ENCODE measurements at regions of chr6 and their contacts with region 1.

Region 1: DNA sequence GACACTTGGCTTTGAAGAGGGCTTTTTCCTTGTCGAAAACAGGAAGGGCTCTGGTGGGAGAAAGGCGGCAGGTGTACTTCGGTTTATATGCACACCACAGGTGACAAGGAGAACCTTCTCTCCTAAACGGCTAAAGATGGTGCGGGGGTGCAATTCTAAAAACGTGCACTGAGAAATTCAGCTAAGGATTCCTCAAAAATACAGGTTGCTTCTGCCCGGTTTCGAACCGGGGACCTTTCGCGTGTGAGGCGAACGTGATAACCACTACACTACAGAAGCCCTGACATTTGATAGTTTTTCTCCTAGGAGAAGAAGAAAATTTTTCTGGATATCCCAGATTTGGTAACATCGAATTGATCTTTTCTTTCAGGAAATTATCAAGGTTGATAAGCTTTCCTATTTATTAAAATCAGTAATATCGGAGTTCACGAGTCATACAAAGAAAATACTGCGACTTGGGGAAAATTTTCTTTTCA is 32.0 kb downstream of the POM121L2 start:
- DNase-seq: peak; percentile 61 to 70
- H3K4me3 ChIP-seq: peak overlapping the region; percentile 60
- H3K27ac ChIP-seq: peak overlapping the region; percentile 3; the same call in 1 of the 2 replicates
- H3K4me1 ChIP-seq: peaks cover 5% of the 10 kb centered on the region
- H3K27me3 ChIP-seq: no peaks in the 10 kb centered on the region
- CTCF ChIP-seq: no peak

Region 2: GRCh38 chr6:26473758-26474438 is 806.2 kb before region 1 on chr6:
- CTCF ChIA-PET with region 1: no interaction called
- POLR2A ChIA-PET with region 1: interaction called, 17 read pairs
- intact Hi-C with region 1: no loop called
- DNase-seq: peak; percentile 75 to 88
- H3K4me3 ChIP-seq: peak overlapping the region; percentile 62
- H3K27ac ChIP-seq: peak overlapping the region; percentile 76
- H3K4me1 ChIP-seq: peaks cover 29% of the 10 kb centered on the region
- H3K27me3 ChIP-seq: no peaks in the 10 kb centered on the region
- CTCF ChIP-seq: no peak

Region 3: DNA sequence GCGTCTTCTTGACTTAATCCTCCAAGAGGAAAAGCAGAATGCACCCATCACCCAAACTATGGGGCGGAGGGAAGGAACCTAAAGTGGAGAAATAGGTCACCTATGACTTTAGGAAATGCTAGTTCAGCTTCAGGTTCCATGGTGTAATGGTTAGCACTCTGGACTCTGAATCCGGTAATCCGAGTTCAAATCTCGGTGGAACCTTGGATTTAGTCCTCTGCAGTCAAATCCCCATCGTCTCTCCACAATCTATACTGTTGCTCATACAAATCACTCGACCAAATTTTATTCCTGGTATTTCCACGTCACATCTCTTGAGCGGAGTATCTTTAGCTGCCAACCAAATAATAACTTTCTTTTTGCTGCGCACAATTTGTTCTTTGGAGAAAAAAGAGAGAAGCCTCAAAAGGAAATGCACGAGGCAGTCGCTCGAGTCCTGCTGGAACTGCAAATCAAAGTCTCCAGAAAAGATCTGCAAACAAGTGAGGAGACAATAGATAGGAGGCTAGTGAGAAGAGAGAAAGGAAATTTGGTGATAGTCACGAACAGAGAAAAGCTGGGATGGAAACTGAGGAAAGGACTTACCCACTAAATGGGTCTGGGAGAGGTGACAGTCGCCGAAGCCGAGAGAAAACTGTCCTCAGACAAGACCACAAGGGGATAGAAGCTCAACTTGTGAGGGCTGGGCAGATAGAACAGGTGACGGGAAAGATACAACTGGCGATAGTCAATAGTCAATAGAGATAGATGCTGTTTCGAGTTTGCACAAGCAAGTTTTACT is 15.4 kb after region 1 on chr6:
- CTCF ChIA-PET with region 1: interaction called, 3 read pairs
- POLR2A ChIA-PET with region 1: no interaction called
- intact Hi-C with region 1: loop called (anchors 1 kb)
- DNase-seq: peak; percentile 49 to 73
- H3K4me3 ChIP-seq: peak overlapping the region; percentile 84
- H3K27ac ChIP-seq: no peak overlapping the region
- H3K4me1 ChIP-seq: peaks cover 27% of the 10 kb centered on the region
- H3K27me3 ChIP-seq: no peaks in the 10 kb centered on the region
- CTCF ChIP-seq: no peak

Region 4: GRCh38 chr6:28008053-28008452 is 728.0 kb after region 1 on chr6:
- CTCF ChIA-PET with region 1: no interaction called
- POLR2A ChIA-PET with region 1: interaction called, 24 read pairs
- intact Hi-C with region 1: no loop called
- DNase-seq: no peak
- H3K4me3 ChIP-seq: no peak overlapping the region
- H3K27ac ChIP-seq: no peak overlapping the region
- H3K4me1 ChIP-seq: no peaks in the 10 kb centered on the region
- H3K27me3 ChIP-seq: no peaks in the 10 kb centered on the region
- CTCF ChIP-seq: no peak